Tibial artery (tissue), 4 donors: ENCODE measurements at regions of chr16 and their contacts with region 1.

Region 1: GRCh38 chr16:78784771-78785170 is 685.3 kb downstream of the WWOX start:
- DNase-seq: no peak
- H3K4me3 ChIP-seq: no peak overlapping the region
- H3K27ac ChIP-seq: no peak overlapping the region
- H3K4me1 ChIP-seq: no peaks in the 10 kb centered on the region
- H3K27me3 ChIP-seq: no peaks in the 10 kb centered on the region
- CTCF ChIP-seq: no peak

Region 2: DNA sequence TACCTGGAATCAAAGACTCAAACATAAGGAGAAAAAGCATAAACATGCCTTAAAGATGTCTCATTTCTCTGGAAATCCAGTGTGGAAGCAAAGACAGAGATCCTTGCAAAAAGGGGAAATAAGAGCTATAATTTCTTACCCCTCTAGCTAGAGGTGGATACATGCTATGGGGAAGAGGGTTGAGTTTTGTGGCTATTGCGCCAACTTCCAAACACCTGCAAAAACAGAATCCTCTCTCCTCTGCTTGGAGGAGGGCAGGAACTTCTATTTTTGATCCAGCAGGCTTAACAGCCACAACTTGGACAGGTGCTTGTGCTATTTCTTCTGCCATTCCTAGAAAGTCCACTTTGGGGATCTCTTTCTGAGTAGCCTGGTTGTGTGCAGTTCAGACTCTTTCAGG is 1083.9 kb before region 1 on chr16:
- intact Hi-C with region 1: no loop called
- DNase-seq: no peak
- H3K4me3 ChIP-seq: no peak overlapping the region
- H3K27ac ChIP-seq: no peak overlapping the region
- H3K4me1 ChIP-seq: no peaks in the 10 kb centered on the region
- H3K27me3 ChIP-seq: no peaks in the 10 kb centered on the region
- CTCF ChIP-seq: no peak

Region 3: DNA sequence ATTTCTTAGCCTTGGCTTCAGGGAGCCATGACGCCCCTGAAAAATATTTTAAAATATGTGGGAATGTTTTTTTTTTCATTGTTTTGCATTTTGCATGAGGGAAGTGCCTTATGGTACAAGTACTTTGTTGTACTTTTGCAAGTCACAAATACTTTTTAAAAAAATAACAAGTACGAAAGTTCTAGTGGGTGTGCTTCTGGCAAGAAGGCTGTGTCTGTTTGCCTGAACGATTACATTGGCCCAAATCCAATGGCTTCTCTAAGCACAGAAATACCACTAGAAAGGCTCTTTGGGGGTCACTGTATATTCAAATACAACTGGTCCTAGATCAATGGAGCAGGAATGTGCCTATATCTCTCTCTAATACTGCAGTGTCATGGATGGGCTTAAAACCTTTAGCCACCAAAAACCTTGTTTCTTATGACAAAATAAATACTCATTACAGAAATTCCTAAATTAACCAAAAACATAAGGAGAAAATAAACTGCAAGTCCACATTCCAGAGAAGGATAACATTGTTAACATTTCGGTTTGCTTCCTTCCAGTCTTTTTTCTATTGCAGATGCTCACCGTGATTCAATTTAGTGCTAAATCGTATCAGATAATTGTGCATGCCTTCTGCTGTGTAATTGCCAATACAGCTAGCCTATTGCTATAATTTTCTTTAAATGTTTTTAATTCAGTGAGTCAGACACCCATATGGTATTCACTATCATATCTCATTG is 899.0 kb before region 1 on chr16:
- intact Hi-C with region 1: loop called (anchors 5 kb)
- DNase-seq: no peak
- H3K4me3 ChIP-seq: no peak overlapping the region
- H3K27ac ChIP-seq: peak overlapping the region; percentile 33 to 52
- H3K4me1 ChIP-seq: peaks cover 0 to 36% (median 16%) of the 10 kb centered on the region in 4 donors
- H3K27me3 ChIP-seq: no peaks in the 10 kb centered on the region
- CTCF ChIP-seq: no peak